MCF 10A (cell line): ENCODE measurements at regions of chr1 and their contacts with region 1.

Region 1: GRCh38 chr1:174262349-174263241 is 103.3 kb downstream of the RABGAP1L start:
- DNase-seq: peak; percentile 59
- H3K4me3 Mint-ChIP-seq: no peak overlapping the region
- H3K27ac Mint-ChIP-seq: no peak overlapping the region
- H3K4me1 Mint-ChIP-seq: no peaks in the 10 kb centered on the region
- H3K27me3 Mint-ChIP-seq: no peaks in the 10 kb centered on the region
- CTCF ChIP-seq: peak; percentile 90

Region 2: GRCh38 chr1:174230399-174230798 is 32.2 kb before region 1 on chr1:
- CTCF ChIA-PET with region 1: interaction called, 11 read pairs
- POLR2A ChIA-PET with region 1: no interaction called
- intact Hi-C with region 1: no loop called
- DNase-seq: no peak
- H3K4me3 Mint-ChIP-seq: no peak overlapping the region
- H3K27ac Mint-ChIP-seq: no peak overlapping the region
- H3K4me1 Mint-ChIP-seq: no peaks in the 10 kb centered on the region
- H3K27me3 Mint-ChIP-seq: no peaks in the 10 kb centered on the region
- CTCF ChIP-seq: no peak

Region 3: GRCh38 chr1:174289644-174290310 is 27.2 kb after region 1 on chr1:
- CTCF ChIA-PET with region 1: interaction called, 16 read pairs
- POLR2A ChIA-PET with region 1: no interaction called
- intact Hi-C with region 1: no loop called
- DNase-seq: no peak
- H3K4me3 Mint-ChIP-seq: no peak overlapping the region
- H3K27ac Mint-ChIP-seq: no peak overlapping the region
- H3K4me1 Mint-ChIP-seq: no peaks in the 10 kb centered on the region
- H3K27me3 Mint-ChIP-seq: no peaks in the 10 kb centered on the region
- CTCF ChIP-seq: no peak

Region 4: GRCh38 chr1:174491606-174492005 is 229.0 kb after region 1 on chr1:
- CTCF ChIA-PET with region 1: interaction called, 11 read pairs
- POLR2A ChIA-PET with region 1: no interaction called
- intact Hi-C with region 1: no loop called
- DNase-seq: no peak
- H3K4me3 Mint-ChIP-seq: no peak overlapping the region
- H3K27ac Mint-ChIP-seq: no peak overlapping the region
- H3K4me1 Mint-ChIP-seq: no peaks in the 10 kb centered on the region
- H3K27me3 Mint-ChIP-seq: no peaks in the 10 kb centered on the region
- CTCF ChIP-seq: no peak

Region 5: DNA sequence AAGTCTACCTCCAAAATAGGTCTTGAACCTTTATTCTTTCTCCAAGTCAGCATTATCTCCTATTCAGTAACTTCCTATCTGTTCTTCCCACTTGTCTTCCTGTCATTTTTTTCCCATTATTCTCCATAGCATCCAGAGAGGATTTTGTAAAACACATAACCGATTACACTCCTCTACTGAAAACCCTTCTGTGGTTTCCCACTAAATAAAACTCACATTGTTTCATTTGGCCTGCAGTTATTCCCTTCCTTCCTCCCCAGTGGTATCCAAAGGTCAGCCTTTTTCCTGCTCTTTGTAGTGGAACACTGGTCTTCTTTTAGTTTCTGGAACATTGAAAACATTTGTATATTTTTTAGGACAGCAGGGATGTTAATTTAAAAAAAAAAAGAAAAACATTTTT is 451.2 kb after region 1 on chr1:
- CTCF ChIA-PET with region 1: interaction called, 24 read pairs
- POLR2A ChIA-PET with region 1: no interaction called
- intact Hi-C with region 1: no loop called
- DNase-seq: no peak
- H3K4me3 Mint-ChIP-seq: no peak overlapping the region
- H3K27ac Mint-ChIP-seq: no peak overlapping the region
- H3K4me1 Mint-ChIP-seq: no peaks in the 10 kb centered on the region
- H3K27me3 Mint-ChIP-seq: no peaks in the 10 kb centered on the region
- CTCF ChIP-seq: no peak

Region 6: GRCh38 chr1:174736831-174737230 is 474.2 kb after region 1 on chr1:
- CTCF ChIA-PET with region 1: interaction called, 191 read pairs
- POLR2A ChIA-PET with region 1: no interaction called
- intact Hi-C with region 1: no loop called
- DNase-seq: no peak
- H3K4me3 Mint-ChIP-seq: no peak overlapping the region
- H3K27ac Mint-ChIP-seq: no peak overlapping the region
- H3K4me1 Mint-ChIP-seq: no peaks in the 10 kb centered on the region
- H3K27me3 Mint-ChIP-seq: no peaks in the 10 kb centered on the region
- CTCF ChIP-seq: no peak

Region 7: DNA sequence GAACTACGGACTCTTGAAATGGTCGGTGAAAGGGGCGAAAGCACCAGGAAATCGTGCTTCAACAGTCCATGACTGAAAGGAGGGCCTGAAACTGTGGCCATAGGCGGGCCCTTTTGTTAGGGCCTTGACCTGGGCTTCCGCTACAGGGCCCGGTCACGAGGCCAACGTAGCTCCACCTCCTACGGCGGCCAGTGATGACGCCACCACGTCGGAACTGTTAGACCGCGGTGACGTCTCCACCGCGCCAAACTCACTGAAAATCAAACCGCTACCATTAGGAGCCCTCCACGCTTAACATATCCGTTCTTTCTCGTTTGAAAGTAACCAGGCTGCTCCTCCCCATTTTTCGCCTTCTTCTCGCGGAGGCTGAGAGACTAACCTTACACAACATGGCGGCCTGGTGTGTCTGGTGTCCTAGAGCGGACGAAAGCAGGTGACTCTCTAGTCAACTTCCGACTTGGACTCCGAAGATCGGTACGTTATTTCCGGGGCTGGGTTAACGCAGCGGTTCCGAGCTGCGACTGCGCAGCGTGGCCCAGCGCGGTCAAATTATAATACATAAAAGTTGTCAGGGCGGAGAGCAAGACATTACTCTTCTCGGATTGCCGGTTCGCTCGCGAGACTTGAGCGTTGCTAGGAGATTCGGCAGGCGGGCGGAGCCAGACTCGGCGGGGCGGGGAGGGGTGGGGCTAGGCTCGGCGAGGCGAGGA is 736.8 kb after region 1 on chr1:
- CTCF ChIA-PET with region 1: interaction called, 10 read pairs
- POLR2A ChIA-PET with region 1: no interaction called
- intact Hi-C with region 1: loop called (anchors 5 kb)
- DNase-seq: peak; percentile 100
- H3K4me3 Mint-ChIP-seq: no peak overlapping the region
- H3K27ac Mint-ChIP-seq: no peak overlapping the region
- H3K4me1 Mint-ChIP-seq: peaks cover 41% of the 10 kb centered on the region
- H3K27me3 Mint-ChIP-seq: no peaks in the 10 kb centered on the region
- CTCF ChIP-seq: no peak